Calu3 (cell line): ENCODE measurements at regions of chr2 and their contacts with region 1.

Region 1: GRCh38 chr2:187842978-187843847 is 289.0 kb upstream of the TFPI start:
- DNase-seq: peak; percentile 45
- H3K4me3 Mint-ChIP-seq: no peak overlapping the region
- H3K27ac Mint-ChIP-seq: no peak overlapping the region
- H3K4me1 Mint-ChIP-seq: peaks cover 17% of the 10 kb centered on the region
- H3K27me3 Mint-ChIP-seq: no peaks in the 10 kb centered on the region
- CTCF ChIP-seq: peak; percentile 56

Region 2: GRCh38 chr2:187581125-187581896 is 261.9 kb before region 1 on chr2:
- CTCF ChIA-PET with region 1: interaction called, 12 read pairs
- intact Hi-C with region 1: loop called (anchors 1 kb)
- DNase-seq: peak; percentile 58
- H3K4me3 Mint-ChIP-seq: peak overlapping the region; percentile 39
- H3K27ac Mint-ChIP-seq: peak overlapping the region; percentile 79
- H3K4me1 Mint-ChIP-seq: peaks cover 32% of the 10 kb centered on the region
- H3K27me3 Mint-ChIP-seq: no peaks in the 10 kb centered on the region
- CTCF ChIP-seq: peak; percentile 59

Region 3: DNA sequence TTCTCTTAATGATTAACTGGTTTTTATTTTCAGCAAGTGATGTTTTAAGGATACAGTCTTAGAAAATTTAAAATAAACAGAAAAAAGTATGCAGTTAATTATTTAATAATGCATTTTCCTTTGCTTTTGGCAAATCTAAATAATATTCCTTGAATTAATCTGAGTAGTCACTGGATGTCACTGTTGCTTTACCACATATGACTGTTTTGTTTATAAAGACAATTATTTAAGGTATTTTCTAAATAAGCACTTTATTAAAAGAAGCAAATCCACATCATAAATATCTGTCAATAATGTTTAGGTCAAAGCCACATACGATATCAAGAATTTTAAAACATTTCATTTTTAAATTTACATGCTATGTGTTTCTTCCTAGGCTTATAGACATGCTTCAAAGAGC is 248.4 kb before region 1 on chr2:
- CTCF ChIA-PET with region 1: no interaction called
- intact Hi-C with region 1: loop called (anchors 1 kb)
- DNase-seq: no peak
- H3K4me3 Mint-ChIP-seq: no peak overlapping the region
- H3K27ac Mint-ChIP-seq: no peak overlapping the region
- H3K4me1 Mint-ChIP-seq: no peaks in the 10 kb centered on the region
- H3K27me3 Mint-ChIP-seq: no peaks in the 10 kb centered on the region
- CTCF ChIP-seq: no peak

Region 4: DNA sequence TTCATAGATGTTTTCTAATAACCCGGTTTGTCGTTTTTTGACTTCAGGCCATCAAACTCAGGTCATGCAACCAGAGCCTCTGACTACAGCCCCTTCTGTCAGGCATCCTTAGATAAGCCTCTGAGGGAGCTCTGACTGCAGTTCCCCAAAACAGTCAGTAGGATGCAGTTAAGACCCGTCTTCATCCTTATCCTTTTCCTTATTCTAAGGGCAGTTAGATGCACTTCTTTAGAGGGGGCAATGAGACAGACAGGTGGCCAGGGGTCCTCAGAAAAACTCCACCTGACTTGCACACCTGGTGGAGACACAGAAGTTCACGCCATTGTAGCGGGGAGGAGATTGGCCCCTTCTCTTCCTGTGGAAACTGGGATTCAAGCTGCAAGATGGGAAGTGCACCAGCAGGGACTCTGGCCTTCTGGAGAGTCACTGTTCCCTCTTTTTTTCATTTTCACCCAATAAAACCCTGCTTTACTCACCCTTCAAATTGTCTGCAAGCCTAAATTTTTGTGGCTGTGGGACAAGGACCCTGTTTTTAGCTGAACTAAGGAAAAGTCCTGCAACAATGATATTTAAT is 184.2 kb before region 1 on chr2:
- CTCF ChIA-PET with region 1: no interaction called
- intact Hi-C with region 1: loop called (anchors 1 kb)
- DNase-seq: no peak
- H3K4me3 Mint-ChIP-seq: no peak overlapping the region
- H3K27ac Mint-ChIP-seq: no peak overlapping the region
- H3K4me1 Mint-ChIP-seq: no peaks in the 10 kb centered on the region
- H3K27me3 Mint-ChIP-seq: no peaks in the 10 kb centered on the region
- CTCF ChIP-seq: peak; percentile 40

Region 5: DNA sequence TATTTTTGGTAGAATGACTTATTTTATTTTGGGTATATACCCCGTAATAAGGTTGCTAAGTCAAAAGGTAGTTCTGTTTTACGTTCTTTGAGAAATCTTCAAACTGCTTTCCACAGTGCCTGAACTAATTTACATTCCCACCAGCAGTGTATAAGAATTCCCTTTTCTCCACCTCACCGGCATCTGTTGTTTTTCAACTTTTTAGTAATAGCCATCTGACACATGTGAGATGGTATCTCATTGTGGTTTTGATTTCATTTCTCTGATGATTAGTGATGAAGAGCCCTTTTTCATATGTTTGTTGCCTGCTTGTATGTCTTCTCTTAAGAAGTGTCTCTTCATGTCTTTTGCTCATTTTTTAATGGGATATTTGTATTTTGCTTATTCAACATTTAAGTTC is 73.8 kb before region 1 on chr2:
- CTCF ChIA-PET with region 1: no interaction called
- intact Hi-C with region 1: no loop called
- DNase-seq: no peak
- H3K4me3 Mint-ChIP-seq: no peak overlapping the region
- H3K27ac Mint-ChIP-seq: no peak overlapping the region
- H3K4me1 Mint-ChIP-seq: peaks cover 8% of the 10 kb centered on the region
- H3K27me3 Mint-ChIP-seq: no peaks in the 10 kb centered on the region
- CTCF ChIP-seq: no peak